H1 (cell line): ENCODE measurements at regions of chr13 and their contacts with region 1.

Region 1: DNA sequence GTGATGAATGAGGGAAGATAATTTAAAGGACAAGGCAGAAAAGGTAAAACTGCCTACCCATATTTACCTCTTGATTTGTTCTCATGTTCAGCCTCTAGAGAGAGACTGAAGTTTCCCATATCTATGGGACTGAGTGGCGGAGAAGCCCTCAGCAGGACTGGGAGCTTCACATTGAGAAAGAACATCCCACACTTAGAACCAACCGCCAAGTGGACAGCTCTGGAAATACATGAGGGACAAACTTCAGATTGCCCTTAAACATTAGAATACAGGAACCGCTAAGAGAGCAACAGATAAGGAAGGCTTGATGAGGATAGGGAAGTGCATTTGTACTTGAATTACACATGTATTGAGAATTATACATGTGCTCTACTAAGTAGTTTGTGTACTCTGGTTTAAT is 316.0 kb upstream of the MIR17HG start:
- DNase-seq: no peak
- H3K4me3 ChIP-seq: no peak overlapping the region
- H3K27ac ChIP-seq: no peak overlapping the region
- H3K4me1 ChIP-seq: no peaks in the 10 kb centered on the region
- H3K27me3 ChIP-seq: no peaks in the 10 kb centered on the region
- CTCF ChIP-seq: peak in 1 of 3 experiments; percentile 33; a peak in 1 of 4 replicates
- EP300 ChIP-seq: no peak
- POLR2A ChIP-seq: no peak
- RAD21 ChIP-seq: no peak

Region 2: GRCh38 chr13:91017031-91017668 is 14.4 kb before region 1 on chr13:
- CTCF ChIA-PET with region 1: interaction called, 14 read pairs
- POLR2A ChIA-PET with region 1: no interaction called
- DNase-seq: peak; percentile 31 to 74
- H3K4me3 ChIP-seq: no peak overlapping the region
- H3K27ac ChIP-seq: no peak overlapping the region
- H3K4me1 ChIP-seq: no peaks in the 10 kb centered on the region
- H3K27me3 ChIP-seq: no peaks in the 10 kb centered on the region
- CTCF ChIP-seq: peak; percentile 43 to 72 (median 65)
- EP300 ChIP-seq: no peak
- POLR2A ChIP-seq: no peak
- RAD21 ChIP-seq: peak; percentile 94 to 96